Heart right ventricle (tissue), 16 donors: ENCODE measurements at regions of chr17 and their contacts with region 1.

Region 1: DNA sequence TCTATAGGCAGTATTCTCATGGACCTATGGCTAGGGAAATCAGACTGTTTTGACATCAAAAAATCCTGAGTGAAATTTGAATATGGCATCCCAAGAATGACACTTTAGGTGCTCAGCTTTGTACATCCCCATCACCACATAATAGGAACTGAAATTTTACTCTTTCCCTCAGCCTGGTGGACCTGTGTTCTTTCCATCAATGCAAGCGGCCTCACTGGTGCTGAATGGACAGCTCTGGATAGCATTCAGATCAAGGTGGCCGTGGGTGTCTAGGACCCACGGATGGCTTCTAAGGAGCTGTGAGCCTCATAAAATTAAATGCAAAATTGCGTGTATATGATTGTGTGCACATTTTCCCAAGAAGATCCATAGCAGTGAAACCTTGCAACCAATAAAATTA is 152.6 kb downstream of the MAP2K6 start:
- DNase-seq: no peak
- ATAC-seq: no peak
- H3K4me3 ChIP-seq: no peak overlapping the region
- H3K27ac ChIP-seq: no peak overlapping the region
- H3K4me1 ChIP-seq: peaks cover 0 to 9% (median 0%) of the 10 kb centered on the region in 9 donors
- H3K27me3 ChIP-seq: no peaks in the 10 kb centered on the region
- CTCF ChIP-seq: no peak

Region 2: GRCh38 chr17:69796078-69796477 is 228.9 kb after region 1 on chr17:
- intact Hi-C with region 1: loop called in 1 of 10 experiments (anchors 10 kb)
- DNase-seq: peak in 1 of 2 donors; percentile 13
- ATAC-seq: peak in 4 of 8 donors; percentile 25 to 54 (median 40)
- H3K4me3 ChIP-seq: no peak overlapping the region
- H3K27ac ChIP-seq: no peak overlapping the region
- H3K4me1 ChIP-seq: peaks cover 0 to 8% (median 0%) of the 10 kb centered on the region in 9 donors
- H3K27me3 ChIP-seq: no peaks in the 10 kb centered on the region
- CTCF ChIP-seq: no peak

Region 3: DNA sequence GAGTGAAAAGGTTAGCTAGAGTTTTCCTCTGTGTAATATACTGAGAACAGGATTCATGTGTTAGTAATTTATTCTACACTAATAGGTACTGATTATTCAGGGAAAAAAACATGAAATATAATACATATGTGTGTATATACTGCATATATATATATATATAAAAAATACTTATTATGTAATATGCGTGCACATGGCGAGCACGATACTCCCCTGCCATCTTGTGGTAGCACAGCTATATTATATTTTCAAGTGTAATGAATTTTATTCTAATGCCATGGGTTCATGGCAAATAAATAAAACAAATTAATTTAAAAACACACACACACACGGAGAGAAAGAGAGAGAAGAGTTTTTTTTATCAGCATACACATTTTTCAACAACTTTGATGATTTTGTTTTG is 1062.8 kb after region 1 on chr17:
- intact Hi-C with region 1: loop called in 5 of 10 experiments (anchors 2 to 10 kb)
- DNase-seq: no peak
- ATAC-seq: no peak
- H3K4me3 ChIP-seq: no peak overlapping the region
- H3K27ac ChIP-seq: no peak overlapping the region
- H3K4me1 ChIP-seq: no peaks in the 10 kb centered on the region
- H3K27me3 ChIP-seq: peaks cover 0 to 4% (median 0%) of the 10 kb centered on the region in 7 donors
- CTCF ChIP-seq: peak; percentile 9 to 55 (median 42)